ENCODE measurements at regions of chr5 and their contacts with region 1.

Region 1: DNA sequence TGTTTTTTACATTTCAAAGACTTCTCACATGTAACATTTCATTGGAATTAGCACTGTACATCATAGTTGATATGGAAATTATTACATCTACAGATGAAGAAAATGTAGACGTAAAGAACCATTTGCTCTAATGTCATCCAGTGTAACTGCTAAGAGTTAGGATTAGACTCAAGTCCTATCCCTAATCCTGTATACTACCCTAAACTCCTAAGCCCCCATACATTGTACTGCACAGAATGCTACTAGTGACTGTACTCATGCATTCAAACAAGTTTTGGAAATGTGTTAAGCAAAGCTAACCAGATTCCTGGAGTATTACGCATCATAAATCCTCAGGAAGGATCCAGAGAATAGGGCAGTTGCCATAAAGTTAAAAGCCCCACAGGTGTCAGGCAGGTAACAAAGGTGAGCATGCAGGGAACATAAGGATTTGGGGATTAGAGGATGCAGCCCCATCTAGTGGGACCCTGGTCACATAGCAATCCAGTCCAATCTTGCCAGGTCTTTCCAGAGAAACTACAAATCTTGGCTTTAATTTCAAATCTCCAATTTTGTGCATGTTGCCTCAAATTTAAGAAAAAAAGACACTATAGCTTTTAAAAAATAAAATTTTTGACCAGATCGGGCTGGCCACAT is 32.0 kb downstream of the HAVCR1 start:
- DNase-seq: peak; percentile 12
- H3K4me3 Mint-ChIP-seq: no peak overlapping the region
- H3K27ac Mint-ChIP-seq: no peak overlapping the region
- H3K4me1 Mint-ChIP-seq: peaks cover 36% of the 10 kb centered on the region
- H3K27me3 Mint-ChIP-seq: no peaks in the 10 kb centered on the region

Region 2: GRCh38 chr5:156402387-156402921 is 624.5 kb before region 1 on chr5:
- CTCF ChIA-PET with region 1: no interaction called
- POLR2A ChIA-PET with region 1: no interaction called
- intact Hi-C with region 1: loop called (anchors 1 kb)
- DNase-seq: peak; percentile 84
- H3K4me3 Mint-ChIP-seq: peak overlapping the region; percentile 13
- H3K27ac Mint-ChIP-seq: peak overlapping the region; percentile 21
- H3K4me1 Mint-ChIP-seq: peaks cover 16% of the 10 kb centered on the region
- H3K27me3 Mint-ChIP-seq: peaks cover 6% of the 10 kb centered on the region

Region 3: DNA sequence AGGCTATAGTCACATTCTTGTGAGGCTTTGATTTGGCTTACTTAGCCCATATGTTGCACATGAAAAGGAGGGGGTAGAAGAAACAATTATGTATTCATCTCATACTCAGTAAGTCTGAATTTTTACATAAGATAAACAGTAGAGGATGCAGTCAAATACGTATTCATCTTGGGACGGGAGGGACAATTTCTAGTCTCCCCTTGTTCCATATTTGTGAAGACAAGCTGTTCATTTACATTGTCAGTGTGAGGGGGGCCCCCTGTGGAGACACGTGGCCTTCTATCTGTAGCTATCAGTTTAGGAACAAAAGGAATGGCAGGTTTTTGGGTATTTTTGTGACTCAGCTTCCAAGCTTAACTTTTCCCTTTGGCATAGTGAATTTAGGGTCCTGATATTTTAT is 226.0 kb before region 1 on chr5:
- CTCF ChIA-PET with region 1: no interaction called
- POLR2A ChIA-PET with region 1: no interaction called
- intact Hi-C with region 1: no loop called
- DNase-seq: no peak
- H3K4me3 Mint-ChIP-seq: no peak overlapping the region
- H3K27ac Mint-ChIP-seq: no peak overlapping the region
- H3K4me1 Mint-ChIP-seq: no peaks in the 10 kb centered on the region
- H3K27me3 Mint-ChIP-seq: peaks cover 2% of the 10 kb centered on the region

Region 4: DNA sequence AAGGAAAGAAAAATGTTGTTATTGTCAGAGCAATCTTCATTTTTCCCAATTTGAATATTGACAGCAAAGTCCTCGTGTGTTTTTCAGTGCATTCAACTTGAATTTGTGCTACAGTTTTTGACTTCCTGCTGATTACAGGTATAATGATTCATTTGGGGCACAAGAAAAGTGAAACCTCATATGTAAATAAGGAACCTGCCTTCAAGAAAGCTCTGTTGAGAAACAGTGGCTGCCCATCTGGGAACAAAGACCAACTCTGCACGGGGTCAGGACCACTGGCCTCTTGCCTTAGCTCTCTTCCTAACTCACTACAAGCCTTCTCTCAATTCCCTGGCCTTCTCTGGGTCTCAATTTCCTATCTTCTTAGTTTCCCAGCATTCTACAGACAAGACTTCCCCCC is 84.8 kb before region 1 on chr5:
- CTCF ChIA-PET with region 1: interaction called, 3 read pairs
- POLR2A ChIA-PET with region 1: interaction called, 4 read pairs
- intact Hi-C with region 1: loop called (anchors 1 kb)
- DNase-seq: no peak
- H3K4me3 Mint-ChIP-seq: no peak overlapping the region
- H3K27ac Mint-ChIP-seq: peak overlapping the region; percentile 52
- H3K4me1 Mint-ChIP-seq: peaks cover 16% of the 10 kb centered on the region
- H3K27me3 Mint-ChIP-seq: no peaks in the 10 kb centered on the region

Region 5: GRCh38 chr5:157076558-157076957 is 49.7 kb after region 1 on chr5:
- CTCF ChIA-PET with region 1: no interaction called
- POLR2A ChIA-PET with region 1: no interaction called
- intact Hi-C with region 1: loop called (anchors 2 kb)
- DNase-seq: peak; percentile 22
- H3K4me3 Mint-ChIP-seq: no peak overlapping the region
- H3K27ac Mint-ChIP-seq: no peak overlapping the region
- H3K4me1 Mint-ChIP-seq: peaks cover 22% of the 10 kb centered on the region
- H3K27me3 Mint-ChIP-seq: no peaks in the 10 kb centered on the region

Region 6: DNA sequence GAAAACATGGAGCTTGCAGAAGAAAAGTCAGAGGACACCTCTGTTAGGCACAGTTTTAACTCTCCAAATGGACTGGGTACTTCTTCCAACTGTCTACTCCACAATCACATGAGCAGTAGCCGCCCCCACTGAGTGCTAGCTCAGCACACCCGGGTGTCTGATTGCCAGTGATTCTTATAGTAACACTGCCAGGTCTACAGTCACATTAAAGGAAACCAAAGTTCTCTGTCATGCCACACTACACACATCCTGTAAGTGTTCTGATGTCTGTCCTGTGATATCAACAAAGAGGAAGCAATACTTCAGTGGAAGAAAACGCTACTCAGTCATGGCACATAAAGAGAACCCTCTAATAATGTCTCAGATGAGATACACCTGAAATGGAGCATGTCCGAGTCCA is 82.1 kb after region 1 on chr5 and contains the start of gene HAVCR2:
- CTCF ChIA-PET with region 1: interaction called, 4 read pairs
- POLR2A ChIA-PET with region 1: interaction called, 3 read pairs
- intact Hi-C with region 1: loop called (anchors 1 kb)
- DNase-seq: peak; percentile 84
- H3K4me3 Mint-ChIP-seq: peak within 1 kb of the TSS; percentile 79
- H3K27ac Mint-ChIP-seq: peak within 1 kb of the TSS; percentile 95
- H3K4me1 Mint-ChIP-seq: peaks cover 40% of the 10 kb centered on the region
- H3K27me3 Mint-ChIP-seq: no peaks in the 10 kb centered on the region
- total RNA-seq, gene HAVCR2: 23.2 to 24.3 TPM

Measured in activated CD4-positive, alpha-beta memory T cell treated with anti-CD3 and anti-CD28 coated beads for 36 hours (primary cell).